BJ (cell line): ENCODE measurements at regions of chr21 and their contacts with region 1.

Region 1: GRCh38 chr21:29849735-29850176 is 90.0 kb downstream of the GRIK1 start:
- DNase-seq: no peak
- H3K4me3 ChIP-seq: no peak overlapping the region
- H3K27me3 ChIP-seq: no peaks in the 10 kb centered on the region
- CTCF ChIP-seq: peak; percentile 85

Region 2: GRCh38 chr21:29477941-29478340 is 371.8 kb before region 1 on chr21:
- CTCF ChIA-PET with region 1: interaction called, 21 read pairs
- POLR2A ChIA-PET with region 1: no interaction called
- DNase-seq: no peak
- H3K4me3 ChIP-seq: no peak overlapping the region
- H3K27me3 ChIP-seq: no peaks in the 10 kb centered on the region
- CTCF ChIP-seq: no peak